Ascending aorta (tissue), 2 donors: ENCODE measurements at regions of chr6 and their contacts with region 1.

Region 1: DNA sequence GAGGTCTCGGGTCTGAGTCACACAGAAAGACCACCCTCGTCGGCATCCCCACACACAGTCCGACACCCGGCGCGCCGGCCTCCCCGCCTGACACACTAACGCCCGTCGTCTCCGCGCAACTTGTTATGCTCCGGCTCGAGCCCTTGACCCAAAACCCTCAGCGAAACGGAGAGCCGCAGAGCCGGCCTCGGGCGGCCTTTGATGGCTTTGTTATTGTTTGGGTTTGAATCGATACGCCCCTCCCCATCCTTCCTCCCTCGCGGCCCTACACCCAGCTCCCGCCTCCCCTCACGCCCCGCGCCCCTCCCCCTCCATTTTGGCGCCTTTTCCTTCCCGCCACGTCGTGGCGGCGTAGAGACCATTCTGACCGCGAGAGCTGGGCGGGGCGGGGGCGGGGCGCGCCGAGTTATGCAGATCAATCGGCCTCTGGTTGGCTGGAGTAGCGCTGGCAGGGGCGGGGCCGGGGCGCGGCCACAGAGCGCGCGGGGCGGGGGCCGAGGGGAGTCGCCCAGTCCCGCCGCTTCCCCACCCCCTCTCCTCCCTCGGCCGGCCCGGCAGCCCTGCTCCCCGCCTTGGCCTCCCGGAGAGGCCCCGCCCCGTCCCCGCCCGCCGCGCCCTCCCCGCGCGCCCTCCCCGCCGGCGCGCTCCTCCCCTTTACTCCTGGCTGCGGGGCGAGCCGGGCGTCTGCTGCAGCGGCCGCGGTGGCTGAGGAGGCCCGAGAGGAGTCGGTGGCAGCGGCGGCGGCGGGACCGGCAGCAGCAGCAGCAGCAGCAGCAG is at the start of gene PIM1:
- DNase-seq: peak; percentile 96 to 99
- H3K4me3 ChIP-seq: peak within 1 kb of the TSS; percentile 91 to 92
- H3K27ac ChIP-seq: peak within 1 kb of the TSS; percentile 97
- H3K4me1 ChIP-seq: peaks cover 0 to 18% of the 10 kb centered on the region in 2 donors
- H3K27me3 ChIP-seq: no peaks in the 10 kb centered on the region
- CTCF ChIP-seq: no peak
- total RNA-seq, gene PIM1: 17.7 TPM

Region 2: DNA sequence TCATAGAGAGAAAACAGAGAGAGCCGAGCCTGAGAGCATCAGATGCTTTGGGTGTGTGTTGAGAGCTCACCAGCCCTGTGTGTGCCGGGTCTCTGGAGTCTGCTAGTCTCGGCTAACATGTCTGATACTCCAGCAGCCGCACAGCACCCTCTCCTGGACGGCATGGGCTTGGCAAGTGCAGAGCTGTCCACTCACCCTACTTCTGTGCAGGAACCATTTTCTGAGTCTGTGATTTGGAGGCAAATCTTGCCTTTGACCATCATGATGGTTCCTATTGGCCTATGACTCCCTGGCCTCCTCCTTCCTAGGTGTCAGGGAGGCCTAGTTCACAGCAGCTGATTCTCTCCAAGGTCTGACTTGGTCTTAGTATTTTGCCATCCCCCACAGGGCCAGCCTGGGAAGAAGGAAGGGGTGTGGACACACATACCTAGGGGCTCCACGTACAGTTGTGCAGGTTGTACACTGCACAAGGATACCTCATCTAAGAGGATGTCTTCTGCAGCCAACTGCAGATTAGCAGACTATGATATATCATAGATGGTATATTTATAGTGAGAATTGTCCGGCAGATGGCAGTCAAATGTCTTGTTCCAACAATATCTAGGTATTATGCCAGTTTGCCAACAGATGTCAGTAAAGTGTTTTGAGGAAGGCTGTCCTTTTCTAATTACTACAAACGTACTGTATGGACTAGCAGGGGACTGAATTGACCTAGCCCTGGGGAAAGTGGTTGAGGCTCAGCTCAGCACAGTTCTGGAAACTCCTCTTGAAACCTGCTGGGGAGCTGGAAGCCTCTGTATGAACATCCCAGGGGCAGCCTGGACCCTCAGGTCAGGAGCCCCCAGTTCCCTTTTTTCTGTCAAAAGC is 151.3 kb before region 1 on chr6:
- intact Hi-C with region 1: loop called (anchors 1 kb)
- DNase-seq: peak; percentile 64 to 95
- H3K4me3 ChIP-seq: no peak overlapping the region
- H3K27ac ChIP-seq: peak overlapping the region; percentile 32 to 63
- H3K4me1 ChIP-seq: peaks cover 0 to 2% of the 10 kb centered on the region in 2 donors
- H3K27me3 ChIP-seq: no peaks in the 10 kb centered on the region
- CTCF ChIP-seq: peak; percentile 83 to 91 (median 86)

Region 3: GRCh38 chr6:37102279-37103168 is 67.2 kb before region 1 on chr6:
- intact Hi-C with region 1: loop called (anchors 1 kb)
- DNase-seq: peak; percentile 70 to 96
- H3K4me3 ChIP-seq: peak overlapping the region; percentile 7 to 62
- H3K27ac ChIP-seq: peak overlapping the region; percentile 70 to 88
- H3K4me1 ChIP-seq: peaks cover 11% of the 10 kb centered on the region in 2 donors
- H3K27me3 ChIP-seq: no peaks in the 10 kb centered on the region
- CTCF ChIP-seq: no peak

Region 4: GRCh38 chr6:37134606-37135191 is 35.0 kb before region 1 on chr6:
- intact Hi-C with region 1: loop called (anchors 1 kb)
- DNase-seq: peak; percentile 63 to 93
- H3K4me3 ChIP-seq: no peak overlapping the region
- H3K27ac ChIP-seq: peak overlapping the region; percentile 87 to 92
- H3K4me1 ChIP-seq: peaks cover 9 to 35% of the 10 kb centered on the region in 2 donors
- H3K27me3 ChIP-seq: no peaks in the 10 kb centered on the region
- CTCF ChIP-seq: no peak

Region 5: DNA sequence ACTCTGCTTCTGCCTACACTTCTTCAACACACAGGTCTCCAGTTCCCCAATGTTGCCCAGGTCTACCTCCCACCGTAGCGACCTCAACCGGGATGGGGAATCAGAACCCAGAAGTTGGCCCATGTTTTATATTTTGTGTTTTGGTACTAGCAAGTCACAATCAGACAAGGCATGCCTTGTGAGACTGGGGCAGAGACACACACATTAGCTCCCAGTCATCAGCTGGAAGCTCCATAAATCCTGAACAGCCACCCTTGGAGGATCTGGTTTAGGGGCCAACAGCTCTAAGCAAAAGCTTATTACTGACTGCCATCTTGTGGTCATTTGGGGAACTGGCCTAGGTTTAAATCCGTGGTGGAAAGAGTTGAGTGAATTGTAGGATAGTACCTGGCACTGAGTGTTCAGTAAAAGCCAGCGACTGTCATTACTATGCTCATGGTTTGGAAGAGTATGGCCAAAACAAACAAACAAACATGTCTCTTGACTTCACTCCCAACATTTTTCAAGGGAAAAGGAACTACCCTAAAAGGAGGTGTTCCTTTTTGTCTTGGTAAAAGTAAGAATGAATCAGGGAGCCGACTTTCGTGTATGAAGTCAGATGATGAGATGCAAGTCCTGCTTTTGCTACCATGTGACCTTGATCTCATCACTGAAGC is 40.8 kb after region 1 on chr6:
- intact Hi-C with region 1: loop called (anchors 1 kb)
- DNase-seq: peak in 1 of 2 donors; percentile 89
- H3K4me3 ChIP-seq: no peak overlapping the region
- H3K27ac ChIP-seq: no peak overlapping the region
- H3K4me1 ChIP-seq: no peaks in the 10 kb centered on the region
- H3K27me3 ChIP-seq: no peaks in the 10 kb centered on the region
- CTCF ChIP-seq: peak; percentile 91 to 98 (median 96)

Region 6: GRCh38 chr6:38522322-38522721 is 1352.6 kb after region 1 on chr6:
- intact Hi-C with region 1: no loop called
- DNase-seq: no peak
- H3K4me3 ChIP-seq: no peak overlapping the region
- H3K27ac ChIP-seq: no peak overlapping the region
- H3K4me1 ChIP-seq: no peaks in the 10 kb centered on the region
- H3K27me3 ChIP-seq: no peaks in the 10 kb centered on the region
- CTCF ChIP-seq: no peak